Activated CD4-positive, alpha-beta T cell treated with anti-CD3 and anti-CD28 coated beads for 36 hours (primary cell): ENCODE measurements at regions of chr3 and their contacts with region 1.

Region 1: GRCh38 chr3:33883538-33883950 is 85.1 kb downstream of the PDCD6IP start:
- DNase-seq: no peak
- ATAC-seq: peak; percentile 19
- H3K4me3 Mint-ChIP-seq: no peak overlapping the region
- H3K27ac Mint-ChIP-seq: no peak overlapping the region
- H3K4me1 Mint-ChIP-seq: peaks cover 4% of the 10 kb centered on the region
- H3K27me3 Mint-ChIP-seq: no peaks in the 10 kb centered on the region

Region 2: GRCh38 chr3:33773637-33774036 is 109.9 kb before region 1 on chr3:
- CTCF ChIA-PET with region 1: no interaction called
- POLR2A ChIA-PET with region 1: no interaction called
- intact Hi-C with region 1: no loop called
- DNase-seq: no peak
- ATAC-seq: no peak
- H3K4me3 Mint-ChIP-seq: no peak overlapping the region
- H3K27ac Mint-ChIP-seq: no peak overlapping the region
- H3K4me1 Mint-ChIP-seq: no peaks in the 10 kb centered on the region
- H3K27me3 Mint-ChIP-seq: no peaks in the 10 kb centered on the region

Region 3: DNA sequence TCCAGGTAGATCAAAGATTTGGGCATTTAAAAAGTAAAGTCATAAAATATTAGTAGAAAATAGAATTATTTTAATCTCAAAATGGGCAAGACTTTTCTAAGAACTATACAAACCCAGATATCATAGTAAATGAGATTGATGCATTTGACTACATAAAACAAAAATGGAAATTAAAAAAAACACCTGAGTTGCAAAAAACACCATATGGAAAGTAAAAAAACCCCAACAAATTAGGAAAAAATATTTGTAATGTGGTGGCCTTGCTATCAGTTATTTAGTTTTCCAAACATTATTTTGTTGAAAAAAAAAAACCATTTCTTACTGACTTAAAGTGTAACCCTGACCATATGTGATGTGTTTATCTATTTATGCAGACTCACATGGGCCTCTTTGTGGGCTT is 12.1 kb after region 1 on chr3:
- CTCF ChIA-PET with region 1: no interaction called
- POLR2A ChIA-PET with region 1: no interaction called
- intact Hi-C with region 1: no loop called
- DNase-seq: no peak
- ATAC-seq: no peak
- H3K4me3 Mint-ChIP-seq: no peak overlapping the region
- H3K27ac Mint-ChIP-seq: no peak overlapping the region
- H3K4me1 Mint-ChIP-seq: no peaks in the 10 kb centered on the region
- H3K27me3 Mint-ChIP-seq: no peaks in the 10 kb centered on the region

Region 4: DNA sequence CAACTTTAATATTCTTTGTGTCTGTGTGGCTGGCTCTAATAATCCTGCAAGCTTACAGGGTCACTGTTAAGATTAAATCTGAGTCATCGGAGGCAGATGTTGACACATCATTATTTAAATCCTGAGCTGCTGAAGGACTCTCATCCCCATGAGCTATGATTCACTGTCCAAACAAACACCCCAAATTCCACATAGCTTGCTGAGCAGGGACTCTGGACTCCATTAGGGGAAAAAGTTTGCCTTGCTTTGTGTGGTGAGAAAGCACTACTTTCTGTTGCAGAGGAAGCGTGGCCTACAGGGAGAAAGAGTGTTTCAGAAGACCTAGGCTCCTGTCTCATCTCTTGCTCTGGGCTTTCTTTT is 128.5 kb after region 1 on chr3:
- CTCF ChIA-PET with region 1: interaction called, 9 read pairs
- POLR2A ChIA-PET with region 1: no interaction called
- intact Hi-C with region 1: loop called (anchors 2 to 10 kb)
- DNase-seq: no peak
- ATAC-seq: no peak
- H3K4me3 Mint-ChIP-seq: no peak overlapping the region
- H3K27ac Mint-ChIP-seq: no peak overlapping the region
- H3K4me1 Mint-ChIP-seq: peaks cover 8% of the 10 kb centered on the region
- H3K27me3 Mint-ChIP-seq: no peaks in the 10 kb centered on the region

Region 5: DNA sequence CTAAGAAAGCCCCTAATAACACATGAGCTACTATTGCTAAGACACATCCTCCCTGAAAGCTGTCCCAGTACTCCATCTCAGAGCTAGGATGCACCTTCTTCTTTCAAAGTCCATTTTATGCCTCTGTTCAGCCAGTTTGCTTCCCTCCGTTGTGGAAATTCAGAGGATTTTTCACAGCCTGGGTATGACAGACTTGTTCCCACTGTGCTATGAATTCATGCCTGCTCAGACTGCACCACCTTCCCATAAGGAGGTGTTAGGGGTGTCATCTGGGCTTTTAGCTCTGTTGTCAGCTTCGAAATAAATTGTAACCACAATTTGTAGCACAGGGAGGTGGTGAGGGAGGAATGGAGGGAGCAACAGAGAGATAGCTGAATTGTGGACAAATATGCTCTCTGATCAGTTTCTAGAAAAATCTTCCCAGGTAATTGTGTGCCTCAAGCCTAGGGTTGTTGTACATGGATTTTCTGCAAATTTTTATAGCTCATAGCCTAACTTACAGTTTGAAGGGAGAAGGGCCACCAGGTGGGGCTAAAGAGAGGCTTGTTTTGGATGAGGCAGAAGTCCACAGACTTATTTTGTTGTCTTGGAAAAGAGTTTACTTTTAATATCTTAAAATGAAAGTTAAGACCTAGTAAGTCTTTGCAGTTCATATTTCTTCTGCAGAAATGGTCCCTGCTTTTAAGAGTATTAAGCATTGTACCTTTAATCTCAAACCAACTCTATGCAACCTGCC is 376.9 kb after region 1 on chr3:
- CTCF ChIA-PET with region 1: interaction called, 5 read pairs
- POLR2A ChIA-PET with region 1: no interaction called
- intact Hi-C with region 1: loop called (anchors 5 to 10 kb)
- DNase-seq: peak; percentile 73
- ATAC-seq: no peak
- H3K4me3 Mint-ChIP-seq: no peak overlapping the region
- H3K27ac Mint-ChIP-seq: no peak overlapping the region
- H3K4me1 Mint-ChIP-seq: peaks cover 17% of the 10 kb centered on the region
- H3K27me3 Mint-ChIP-seq: peaks cover 8% of the 10 kb centered on the region

Region 6: DNA sequence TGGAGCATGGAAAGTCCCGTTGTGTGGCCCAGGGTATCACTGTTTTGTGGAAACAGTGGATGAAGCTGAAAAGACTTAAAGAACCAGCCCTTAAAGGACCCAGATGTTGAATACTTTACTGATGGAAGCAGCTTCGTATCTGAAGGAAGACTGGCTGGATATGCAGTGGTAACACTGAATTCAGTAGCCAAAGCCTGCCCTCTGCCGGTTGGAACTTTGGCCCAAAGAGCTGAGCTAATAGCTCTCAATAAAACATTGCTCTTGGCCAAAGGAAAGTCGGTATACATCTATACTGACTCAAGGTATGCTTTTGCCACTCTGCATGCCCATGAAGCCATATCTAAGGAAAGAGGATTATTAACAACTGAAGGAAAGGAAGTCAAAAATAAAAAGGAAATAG is 800.3 kb after region 1 on chr3:
- CTCF ChIA-PET with region 1: interaction called, 23 read pairs
- POLR2A ChIA-PET with region 1: no interaction called
- intact Hi-C with region 1: loop called in 1 of 2 experiments (anchors 1 kb)
- DNase-seq: peak; percentile 70
- ATAC-seq: no peak
- H3K4me3 Mint-ChIP-seq: no peak overlapping the region
- H3K27ac Mint-ChIP-seq: no peak overlapping the region
- H3K4me1 Mint-ChIP-seq: no peaks in the 10 kb centered on the region
- H3K27me3 Mint-ChIP-seq: no peaks in the 10 kb centered on the region

Region 7: DNA sequence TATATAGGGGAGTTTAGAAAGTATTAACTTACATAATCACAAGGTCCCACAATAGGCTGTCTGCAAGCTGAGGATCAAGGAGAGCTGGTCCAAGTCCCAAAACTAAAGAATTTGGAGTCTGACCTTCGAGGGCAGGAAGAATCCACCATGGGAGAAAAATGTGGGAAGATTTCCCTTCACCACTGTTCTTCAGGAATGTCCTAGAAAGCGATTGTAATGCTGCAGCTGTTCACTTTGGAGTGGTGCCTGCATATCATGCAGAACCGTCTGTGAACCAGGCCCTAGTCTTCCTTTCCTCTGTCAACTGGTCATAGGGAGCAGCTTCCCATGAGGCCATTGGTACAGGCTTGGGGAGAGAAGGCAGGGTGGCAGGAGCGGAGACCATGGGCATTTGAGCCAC is 1257.9 kb after region 1 on chr3:
- CTCF ChIA-PET with region 1: no interaction called
- POLR2A ChIA-PET with region 1: no interaction called
- intact Hi-C with region 1: no loop called
- DNase-seq: no peak
- ATAC-seq: no peak
- H3K4me3 Mint-ChIP-seq: no peak overlapping the region
- H3K27ac Mint-ChIP-seq: no peak overlapping the region
- H3K4me1 Mint-ChIP-seq: no peaks in the 10 kb centered on the region
- H3K27me3 Mint-ChIP-seq: no peaks in the 10 kb centered on the region